MCF 10A (cell line): ENCODE measurements at regions of chr17 and their contacts with region 1.

Region 1: GRCh38 chr17:65039336-65039988 is 17.1 kb downstream of the GNA13 start:
- DNase-seq: peak; percentile 52
- H3K4me3 Mint-ChIP-seq: peak overlapping the region; percentile 49
- H3K27ac Mint-ChIP-seq: peak overlapping the region; percentile 46
- H3K4me1 Mint-ChIP-seq: peaks cover 40% of the 10 kb centered on the region
- H3K27me3 Mint-ChIP-seq: no peaks in the 10 kb centered on the region
- CTCF ChIP-seq: no peak

Region 2: DNA sequence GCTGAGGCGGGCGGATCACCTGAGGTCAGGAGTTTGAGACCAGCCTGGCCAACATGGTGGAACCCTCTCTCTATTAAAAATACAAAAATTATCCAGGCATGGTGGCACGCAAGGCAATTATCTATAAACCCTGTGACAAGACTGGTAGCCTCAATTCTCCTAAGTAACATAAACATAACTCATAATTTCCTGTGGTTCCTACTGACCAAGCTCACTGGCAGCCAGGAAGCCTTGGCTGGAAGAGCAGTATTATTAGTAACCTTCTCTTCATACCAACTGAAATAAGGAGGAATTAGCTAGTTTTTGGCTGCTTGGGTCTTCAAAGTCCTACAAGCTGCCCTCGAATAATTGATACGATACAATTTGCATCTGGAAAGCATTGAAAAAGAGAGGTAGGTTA is 88.6 kb before region 1 on chr17:
- CTCF ChIA-PET with region 1: no interaction called
- POLR2A ChIA-PET with region 1: no interaction called
- intact Hi-C with region 1: no loop called
- DNase-seq: no peak
- H3K4me3 Mint-ChIP-seq: no peak overlapping the region
- H3K27ac Mint-ChIP-seq: no peak overlapping the region
- H3K4me1 Mint-ChIP-seq: no peaks in the 10 kb centered on the region
- H3K27me3 Mint-ChIP-seq: no peaks in the 10 kb centered on the region
- CTCF ChIP-seq: no peak

Region 3: GRCh38 chr17:65020313-65020712 is 19.1 kb before region 1 on chr17:
- CTCF ChIA-PET with region 1: interaction called, 4 read pairs
- POLR2A ChIA-PET with region 1: interaction called, 30 read pairs
- intact Hi-C with region 1: no loop called
- DNase-seq: peak; percentile 84
- H3K4me3 Mint-ChIP-seq: peak overlapping the region; percentile 6
- H3K27ac Mint-ChIP-seq: peak overlapping the region; percentile 16
- H3K4me1 Mint-ChIP-seq: peaks cover 56% of the 10 kb centered on the region
- H3K27me3 Mint-ChIP-seq: no peaks in the 10 kb centered on the region
- CTCF ChIP-seq: no peak

Region 4: GRCh38 chr17:65027305-65027704 is 12.2 kb before region 1 on chr17:
- CTCF ChIA-PET with region 1: interaction called, 4 read pairs
- POLR2A ChIA-PET with region 1: interaction called, 30 read pairs
- intact Hi-C with region 1: no loop called
- DNase-seq: peak; percentile 72
- H3K4me3 Mint-ChIP-seq: no peak overlapping the region
- H3K27ac Mint-ChIP-seq: peak overlapping the region; percentile 42
- H3K4me1 Mint-ChIP-seq: peaks cover 38% of the 10 kb centered on the region
- H3K27me3 Mint-ChIP-seq: no peaks in the 10 kb centered on the region
- CTCF ChIP-seq: peak; percentile 36